Activated B cell treated with CpG ODN at 0.5 μM for 24 hours (primary cell): ENCODE measurements at regions of chr2 and their contacts with region 1.

Region 1: GRCh38 chr2:231545105-231545902 is 15.1 kb upstream of the NMUR1 start:
- DNase-seq: peak; percentile 36
- ATAC-seq: peak; percentile 95
- H3K4me3 Mint-ChIP-seq: peak overlapping the region; percentile 74
- H3K27ac Mint-ChIP-seq: peak overlapping the region; percentile 44
- H3K4me1 Mint-ChIP-seq: peaks cover 32% of the 10 kb centered on the region
- H3K27me3 Mint-ChIP-seq: no peaks in the 10 kb centered on the region
- CTCF ChIP-seq: no peak

Region 2: DNA sequence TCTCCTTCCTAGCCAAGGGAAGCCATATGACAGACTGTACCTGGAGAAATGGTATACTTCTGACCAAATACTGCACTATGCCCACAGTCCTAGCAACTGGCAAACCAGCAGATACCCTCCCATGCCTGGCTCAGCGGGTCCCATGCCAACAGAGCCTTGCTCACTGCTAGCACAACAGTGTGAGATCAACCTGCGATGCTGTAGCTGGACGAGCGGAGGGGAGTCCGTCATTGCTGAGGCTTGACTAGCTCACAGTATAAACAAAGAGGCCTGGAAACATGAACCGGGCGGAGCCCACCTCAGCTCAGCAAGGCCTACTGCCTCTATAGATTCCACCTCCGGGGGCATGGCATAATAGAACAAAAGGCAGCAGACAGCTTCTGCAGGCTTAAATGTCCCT is 925.8 kb before region 1 on chr2:
- CTCF ChIA-PET with region 1: no interaction called
- POLR2A ChIA-PET with region 1: no interaction called
- intact Hi-C with region 1: no loop called
- DNase-seq: no peak
- ATAC-seq: no peak
- H3K4me3 Mint-ChIP-seq: no peak overlapping the region
- H3K27ac Mint-ChIP-seq: no peak overlapping the region
- H3K4me1 Mint-ChIP-seq: peaks cover 24% of the 10 kb centered on the region
- H3K27me3 Mint-ChIP-seq: no peaks in the 10 kb centered on the region
- CTCF ChIP-seq: no peak

Region 3: GRCh38 chr2:231530091-231531011 is 15.0 kb before region 1 on chr2 and contains the start of gene NMUR1:
- CTCF ChIA-PET with region 1: interaction called, 4 read pairs
- POLR2A ChIA-PET with region 1: no interaction called
- intact Hi-C with region 1: loop called (anchors 2 kb)
- DNase-seq: peak; percentile 81
- ATAC-seq: peak; percentile 97
- H3K4me3 Mint-ChIP-seq: peak within 1 kb of the TSS; percentile 35
- H3K27ac Mint-ChIP-seq: no peak within 1 kb of the TSS
- H3K4me1 Mint-ChIP-seq: peaks cover 11% of the 10 kb centered on the region
- H3K27me3 Mint-ChIP-seq: peaks cover 27% of the 10 kb centered on the region
- CTCF ChIP-seq: peak; percentile 66
- total RNA-seq, gene NMUR1: not detected in 2 replicates

Region 4: GRCh38 chr2:231662028-231662810 is 116.9 kb after region 1 on chr2:
- CTCF ChIA-PET with region 1: no interaction called
- POLR2A ChIA-PET with region 1: interaction called, 12 read pairs
- intact Hi-C with region 1: no loop called
- DNase-seq: peak; percentile 97
- ATAC-seq: peak; percentile 78
- H3K4me3 Mint-ChIP-seq: peak overlapping the region; percentile 74
- H3K27ac Mint-ChIP-seq: peak overlapping the region; percentile 92
- H3K4me1 Mint-ChIP-seq: peaks cover 67% of the 10 kb centered on the region
- H3K27me3 Mint-ChIP-seq: no peaks in the 10 kb centered on the region
- CTCF ChIP-seq: no peak

Region 5: DNA sequence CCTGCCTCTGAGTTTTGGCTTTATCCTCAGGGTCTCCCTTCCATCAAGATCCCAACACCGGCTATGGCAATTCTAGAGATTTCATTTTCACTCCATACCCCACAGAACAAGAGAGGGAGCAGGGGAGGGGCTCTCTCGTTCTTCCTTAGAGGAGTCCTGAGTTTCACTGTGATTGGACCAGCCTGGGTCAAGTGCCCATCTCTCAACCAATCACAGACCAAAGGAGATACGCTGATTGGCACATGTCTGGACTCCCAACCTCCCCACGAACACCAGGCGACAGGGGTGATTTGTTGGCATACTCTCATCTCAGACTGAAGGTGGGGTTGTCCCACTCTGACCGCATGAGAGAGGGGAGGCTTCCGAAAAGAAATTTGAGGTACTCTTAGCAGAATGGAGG is 316.2 kb after region 1 on chr2:
- CTCF ChIA-PET with region 1: no interaction called
- POLR2A ChIA-PET with region 1: no interaction called
- intact Hi-C with region 1: no loop called
- DNase-seq: no peak
- ATAC-seq: no peak
- H3K4me3 Mint-ChIP-seq: no peak overlapping the region
- H3K27ac Mint-ChIP-seq: no peak overlapping the region
- H3K4me1 Mint-ChIP-seq: no peaks in the 10 kb centered on the region
- H3K27me3 Mint-ChIP-seq: peaks cover 9% of the 10 kb centered on the region
- CTCF ChIP-seq: no peak